ENCODE measurements at regions of chr10 and their contacts with region 1.

Region 1: DNA sequence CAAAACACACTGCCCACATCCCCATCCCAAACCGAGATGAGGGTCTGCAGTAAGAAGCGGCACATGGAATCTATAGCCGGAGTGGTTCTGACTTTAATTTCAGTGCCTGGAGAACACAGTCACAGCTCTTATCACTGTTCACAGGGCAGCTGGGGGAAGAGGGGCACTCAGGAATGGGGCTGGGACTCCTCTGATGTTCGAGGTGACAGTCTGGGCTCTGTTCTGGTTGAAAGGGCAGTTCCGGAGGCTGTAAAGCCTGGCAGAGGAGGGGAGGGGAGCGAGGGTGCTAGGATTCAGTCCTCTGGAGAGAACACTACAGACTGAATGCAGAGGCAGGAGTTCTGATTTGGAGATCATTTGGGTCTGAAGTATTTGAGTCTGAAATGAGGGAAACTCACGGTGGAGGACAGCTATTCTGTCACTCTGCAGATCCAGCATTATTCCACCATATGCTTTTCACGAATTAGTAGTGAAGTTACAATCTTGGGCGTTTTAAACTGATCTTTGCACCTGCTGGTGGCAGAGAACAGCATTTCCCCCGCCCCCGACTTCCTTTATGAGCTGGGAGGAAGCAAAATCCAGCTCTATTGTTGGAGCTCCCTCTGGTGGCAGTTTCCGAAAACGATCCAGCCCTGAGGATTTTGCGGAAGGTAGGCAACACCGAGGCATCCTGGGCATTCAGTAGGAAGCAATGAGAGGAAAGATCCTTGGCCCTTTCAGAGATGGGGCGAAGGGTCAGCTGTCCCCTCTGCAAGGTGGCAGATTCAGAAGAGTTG is 22.7 kb upstream of the KCNK18 start:
- DNase-seq: peak; percentile 72 to 75 (median 74)
- H3K4me3 ChIP-seq: peak overlapping the region; percentile 28 to 73 (median 32)
- H3K4me3 Mint-ChIP-seq: peak overlapping the region; percentile 81 to 92
- H3K27ac ChIP-seq: no peak overlapping the region
- H3K27ac Mint-ChIP-seq: no peak overlapping the region
- H3K4me1 ChIP-seq: peaks cover 9 to 13% of the 10 kb centered on the region in 2 donors
- H3K4me1 Mint-ChIP-seq: peaks cover 17% of the 10 kb centered on the region
- H3K27me3 ChIP-seq: peaks cover 35 to 45% of the 10 kb centered on the region in 2 donors
- H3K27me3 Mint-ChIP-seq: peaks cover 60 to 70% (median 60%) of the 10 kb centered on the region in 3 donors
- CTCF ChIP-seq: peak; percentile 77

Region 2: DNA sequence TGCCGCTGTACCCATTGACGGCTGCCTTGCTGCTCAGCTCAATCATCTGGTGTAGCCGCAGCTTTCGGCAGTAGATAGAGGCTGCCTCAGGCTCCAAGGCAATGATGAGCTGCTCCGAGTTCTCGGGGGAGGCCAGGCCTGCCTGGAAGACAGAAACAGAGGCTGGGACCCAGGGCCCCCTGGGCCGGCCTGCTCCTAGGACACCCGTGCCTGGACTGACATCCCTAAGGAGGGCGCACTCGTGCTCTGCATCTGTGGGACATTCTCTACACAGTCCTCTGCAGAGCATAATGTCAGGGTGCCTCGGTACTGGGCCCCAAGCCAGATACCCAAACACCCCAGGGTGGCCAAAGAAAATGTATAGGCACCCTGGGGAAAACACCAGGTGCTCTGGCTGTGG is 490.8 kb before region 1 on chr10:
- intact Hi-C with region 1: loop called (anchors 5 kb)
- DNase-seq: no peak
- H3K4me3 ChIP-seq: no peak overlapping the region
- H3K4me3 Mint-ChIP-seq: no peak overlapping the region
- H3K27ac ChIP-seq: no peak overlapping the region
- H3K27ac Mint-ChIP-seq: no peak overlapping the region
- H3K4me1 ChIP-seq: no peaks in the 10 kb centered on the region
- H3K4me1 Mint-ChIP-seq: peaks cover 1% of the 10 kb centered on the region
- H3K27me3 ChIP-seq: no peaks in the 10 kb centered on the region
- H3K27me3 Mint-ChIP-seq: peaks cover 0 to 6% (median 3%) of the 10 kb centered on the region in 3 donors
- CTCF ChIP-seq: no peak

Region 3: GRCh38 chr10:116796910-116797513 is 377.6 kb before region 1 on chr10:
- intact Hi-C with region 1: loop called (anchors 2 kb)
- DNase-seq: peak; percentile 49 to 68 (median 59)
- H3K4me3 ChIP-seq: no peak overlapping the region
- H3K4me3 Mint-ChIP-seq: no peak overlapping the region
- H3K27ac ChIP-seq: no peak overlapping the region
- H3K27ac Mint-ChIP-seq: no peak overlapping the region
- H3K4me1 ChIP-seq: no peaks in the 10 kb centered on the region
- H3K4me1 Mint-ChIP-seq: no peaks in the 10 kb centered on the region
- H3K27me3 ChIP-seq: peaks cover 0 to 7% of the 10 kb centered on the region in 2 donors
- H3K27me3 Mint-ChIP-seq: peaks cover 18 to 39% (median 31%) of the 10 kb centered on the region in 3 donors
- CTCF ChIP-seq: peak; percentile 91

Region 4: GRCh38 chr10:117980216-117980615 is 805.6 kb after region 1 on chr10:
- intact Hi-C with region 1: no loop called
- DNase-seq: no peak
- H3K4me3 ChIP-seq: no peak overlapping the region
- H3K4me3 Mint-ChIP-seq: no peak overlapping the region
- H3K27ac ChIP-seq: no peak overlapping the region
- H3K27ac Mint-ChIP-seq: no peak overlapping the region
- H3K4me1 ChIP-seq: no peaks in the 10 kb centered on the region
- H3K4me1 Mint-ChIP-seq: no peaks in the 10 kb centered on the region
- H3K27me3 ChIP-seq: no peaks in the 10 kb centered on the region
- H3K27me3 Mint-ChIP-seq: peaks cover 2 to 8% (median 4%) of the 10 kb centered on the region in 3 donors
- CTCF ChIP-seq: no peak

Measured in CD14-positive monocyte (primary cell).